ENCODE measurements at regions of chr20 and their contacts with region 1.

Region 1: GRCh38 chr20:20360464-20360863 is 7.4 kb upstream of the INSM1 start:
- DNase-seq: peak in 40 of 42 donors; percentile 29 to 86 (median 60)

Region 2: DNA sequence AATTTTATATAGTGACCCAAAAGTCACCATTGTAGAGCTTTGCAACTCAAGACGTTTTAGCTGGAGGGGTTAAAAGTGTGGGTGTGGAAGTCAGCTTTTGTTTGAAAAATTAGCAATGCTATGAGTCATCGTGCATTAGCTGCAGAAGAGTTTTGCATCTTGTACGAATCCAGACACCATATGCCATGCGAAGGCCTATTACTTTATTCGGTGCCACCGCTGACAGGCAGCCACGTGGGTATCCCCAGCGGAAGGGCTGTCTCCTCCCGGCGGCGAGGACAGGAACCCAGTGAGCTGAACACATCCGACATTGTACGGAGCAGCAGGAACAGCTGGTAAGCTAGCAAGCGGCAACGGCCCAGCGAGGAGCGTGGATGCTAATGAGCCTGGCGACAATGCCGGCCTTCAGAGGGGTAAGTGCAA is 91.8 kb after region 1 on chr20:
- intact Hi-C with region 1: loop called (anchors 10 kb)
- DNase-seq: peak; percentile 88 to 99 (median 96)

Region 3: GRCh38 chr20:20520776-20521175 is 160.3 kb after region 1 on chr20:
- intact Hi-C with region 1: no loop called
- DNase-seq: no peak

Region 4: DNA sequence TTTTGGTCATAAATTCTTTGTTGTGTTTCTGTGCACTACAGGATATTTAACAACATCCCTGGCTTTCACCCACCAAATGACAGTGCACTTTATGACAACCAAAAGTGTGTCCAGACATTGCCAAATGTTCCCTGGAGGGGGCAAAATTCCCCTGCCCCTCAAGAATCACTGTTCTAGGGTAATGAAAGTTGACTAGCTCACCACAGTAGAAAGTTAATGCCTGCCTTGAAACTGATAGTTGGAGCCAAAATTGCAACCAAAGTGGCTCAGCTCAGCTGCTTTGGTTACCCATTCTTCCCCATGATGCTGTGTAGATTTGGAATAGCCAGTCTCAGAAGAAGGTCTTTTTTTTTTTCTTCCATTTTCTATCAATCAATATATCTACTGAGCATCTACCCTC is 201.4 kb after region 1 on chr20:
- intact Hi-C with region 1: no loop called
- DNase-seq: no peak

Measured in head of caudate nucleus (tissue), 42 donors.